Caco-2 (cell line): ENCODE measurements at regions of chr10 and their contacts with region 1.

Region 1: DNA sequence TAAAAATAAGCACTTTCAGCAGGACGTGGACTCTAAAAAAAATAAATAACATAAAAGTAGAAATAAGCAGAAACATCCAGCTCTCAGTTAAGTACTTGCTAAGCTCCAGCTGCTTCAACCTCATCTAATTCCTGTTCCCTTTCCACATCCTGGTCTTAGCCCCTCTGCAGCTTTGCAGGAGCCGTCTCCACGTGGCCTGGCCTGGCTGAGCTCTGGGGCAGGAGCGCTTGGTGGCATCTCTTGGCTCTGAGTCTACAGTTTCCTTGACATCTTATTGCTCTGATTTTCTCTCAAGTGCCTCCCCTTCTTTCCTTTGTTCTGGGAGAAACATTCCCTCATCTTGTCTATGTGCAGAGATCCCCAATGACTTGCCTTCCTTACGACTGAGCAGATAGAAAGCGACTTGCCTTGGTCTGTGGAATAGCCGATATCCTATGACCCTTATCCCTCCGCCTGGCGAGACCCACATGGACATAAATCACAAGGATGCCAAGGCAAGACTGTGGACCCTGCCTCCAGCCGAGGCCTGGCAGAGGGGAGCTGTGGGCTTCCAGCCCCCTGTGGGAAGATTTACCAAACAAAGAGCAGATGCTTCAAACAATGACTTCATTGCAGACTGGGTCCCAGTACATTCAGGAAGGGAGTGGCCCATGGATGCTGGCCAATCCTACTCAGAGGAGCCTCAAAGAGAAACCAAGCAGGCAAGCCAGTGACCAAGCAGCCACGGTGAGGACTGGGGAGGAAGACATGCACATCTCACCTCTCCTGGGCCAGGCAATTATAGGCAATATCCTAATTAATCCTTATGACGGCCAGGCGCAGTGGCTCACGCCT is 61.9 kb downstream of the SPOCK2 start:
- DNase-seq: no peak
- H3K4me3 ChIP-seq: no peak overlapping the region
- H3K4me3 Mint-ChIP-seq: no peak overlapping the region
- H3K27ac Mint-ChIP-seq: no peak overlapping the region
- H3K4me1 ChIP-seq: peaks cover 52% of the 10 kb centered on the region
- H3K4me1 Mint-ChIP-seq: peaks cover 32% of the 10 kb centered on the region
- H3K27me3 ChIP-seq: no peaks in the 10 kb centered on the region
- H3K27me3 Mint-ChIP-seq: no peaks in the 10 kb centered on the region
- CTCF ChIP-seq: no peak

Region 2: GRCh38 chr10:71630168-71630567 is 396.3 kb before region 1 on chr10:
- CTCF ChIA-PET with region 1: no interaction called
- POLR2A ChIA-PET with region 1: interaction called, 11 read pairs
- intact Hi-C with region 1: no loop called
- DNase-seq: no peak
- H3K4me3 ChIP-seq: no peak overlapping the region
- H3K4me3 Mint-ChIP-seq: no peak overlapping the region
- H3K27ac Mint-ChIP-seq: no peak overlapping the region
- H3K4me1 ChIP-seq: peaks cover 42% of the 10 kb centered on the region
- H3K4me1 Mint-ChIP-seq: peaks cover 46% of the 10 kb centered on the region
- H3K27me3 ChIP-seq: no peaks in the 10 kb centered on the region
- H3K27me3 Mint-ChIP-seq: no peaks in the 10 kb centered on the region
- CTCF ChIP-seq: no peak

Region 3: GRCh38 chr10:72038458-72039001 is 12.0 kb after region 1 on chr10:
- CTCF ChIA-PET with region 1: interaction called, 3 read pairs
- POLR2A ChIA-PET with region 1: no interaction called
- intact Hi-C with region 1: loop called (anchors 1 kb)
- DNase-seq: peak; percentile 83 to 91
- H3K4me3 ChIP-seq: no peak overlapping the region
- H3K4me3 Mint-ChIP-seq: peak overlapping the region; percentile 33
- H3K27ac Mint-ChIP-seq: peak overlapping the region; percentile 91
- H3K4me1 ChIP-seq: peaks cover 61% of the 10 kb centered on the region
- H3K4me1 Mint-ChIP-seq: peaks cover 43% of the 10 kb centered on the region
- H3K27me3 ChIP-seq: no peaks in the 10 kb centered on the region
- H3K27me3 Mint-ChIP-seq: no peaks in the 10 kb centered on the region
- CTCF ChIP-seq: no peak